Activated CD4-positive, alpha-beta T cell treated with anti-CD3 and anti-CD28 coated beads for 36 hours (primary cell): ENCODE measurements at regions of chr11 and their contacts with region 1.

Region 1: GRCh38 chr11:95231127-95231880 is at the start of gene SESN3:
- DNase-seq: peak; percentile 99
- ATAC-seq: peak; percentile 93
- H3K4me3 Mint-ChIP-seq: no peak within 1 kb of the TSS
- H3K27ac Mint-ChIP-seq: peak within 1 kb of the TSS; percentile 84
- H3K4me1 Mint-ChIP-seq: peaks cover 46% of the 10 kb centered on the region
- H3K27me3 Mint-ChIP-seq: no peaks in the 10 kb centered on the region
- total RNA-seq, gene SESN3: 8.4 to 12.3 TPM

Region 2: GRCh38 chr11:94128746-94129511 is 1102.4 kb before region 1 on chr11 and contains the start of gene PANX1:
- CTCF ChIA-PET with region 1: no interaction called
- POLR2A ChIA-PET with region 1: no interaction called
- intact Hi-C with region 1: loop called in 1 of 2 experiments (anchors 5 kb)
- DNase-seq: peak; percentile 84
- ATAC-seq: peak; percentile 81
- H3K4me3 Mint-ChIP-seq: no peak within 1 kb of the TSS
- H3K27ac Mint-ChIP-seq: peak within 1 kb of the TSS; percentile 90
- H3K4me1 Mint-ChIP-seq: peaks cover 23% of the 10 kb centered on the region
- H3K27me3 Mint-ChIP-seq: no peaks in the 10 kb centered on the region
- total RNA-seq, gene PANX1: 9.8 to 10.7 TPM

Region 3: GRCh38 chr11:95067039-95067840 is 164.1 kb before region 1 on chr11:
- CTCF ChIA-PET with region 1: interaction called, 4 read pairs
- POLR2A ChIA-PET with region 1: no interaction called
- intact Hi-C with region 1: loop called (anchors 1 to 5 kb)
- DNase-seq: peak; percentile 87
- ATAC-seq: peak; percentile 68
- H3K4me3 Mint-ChIP-seq: peak overlapping the region; percentile 97
- H3K27ac Mint-ChIP-seq: peak overlapping the region; percentile 92
- H3K4me1 Mint-ChIP-seq: peaks cover 25% of the 10 kb centered on the region
- H3K27me3 Mint-ChIP-seq: peaks cover 2% of the 10 kb centered on the region

Region 4: DNA sequence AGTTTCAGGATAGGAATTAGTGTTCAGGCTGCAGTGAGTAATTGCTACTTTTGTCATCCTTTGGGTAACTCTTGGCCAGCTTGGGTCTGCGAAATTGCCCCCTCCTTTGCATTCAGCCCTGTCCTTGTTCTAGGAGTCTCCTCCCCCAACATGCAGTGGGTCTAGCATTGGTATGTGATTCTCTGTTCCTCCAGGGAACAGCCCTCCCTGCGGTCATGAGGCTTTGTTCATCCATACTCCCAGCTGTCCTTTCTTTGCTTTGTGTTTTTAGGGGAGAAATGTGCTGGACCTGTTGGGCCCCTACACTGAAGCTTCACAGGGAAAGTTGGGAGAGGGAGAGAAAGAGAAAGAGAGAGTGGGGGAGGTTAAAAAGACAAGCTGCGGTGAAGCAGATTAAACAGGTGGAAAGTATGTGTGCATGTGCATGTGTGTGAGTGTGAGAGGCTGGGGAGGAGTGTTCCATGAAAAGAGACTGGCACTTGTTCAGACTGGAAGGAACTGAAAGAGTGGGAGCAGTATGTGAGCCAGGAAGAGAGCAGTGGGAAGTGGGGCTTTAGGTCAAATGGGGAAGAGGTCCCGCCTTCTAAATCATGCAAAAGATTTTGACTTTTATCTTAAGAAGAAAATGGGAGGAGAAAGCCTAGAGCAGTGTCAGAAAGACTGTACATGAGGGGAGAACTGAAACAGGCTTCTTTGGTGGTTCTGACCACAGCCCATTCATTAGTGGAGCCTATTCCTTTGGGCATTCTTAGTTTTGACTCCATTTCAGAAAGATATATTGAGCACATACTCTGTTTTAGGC is 17.6 kb after region 1 on chr11:
- CTCF ChIA-PET with region 1: interaction called, 12 read pairs
- POLR2A ChIA-PET with region 1: interaction called, 14 read pairs
- intact Hi-C with region 1: loop called (anchors 1 kb)
- DNase-seq: peak; percentile 15
- ATAC-seq: peak; percentile 33
- H3K4me3 Mint-ChIP-seq: no peak overlapping the region
- H3K27ac Mint-ChIP-seq: peak overlapping the region; percentile 56
- H3K4me1 Mint-ChIP-seq: peaks cover 37% of the 10 kb centered on the region
- H3K27me3 Mint-ChIP-seq: no peaks in the 10 kb centered on the region

Region 5: GRCh38 chr11:95556342-95557163 is 325.2 kb after region 1 on chr11:
- CTCF ChIA-PET with region 1: interaction called, 3 read pairs
- POLR2A ChIA-PET with region 1: no interaction called
- intact Hi-C with region 1: loop called in 1 of 2 experiments (anchors 1 kb)
- DNase-seq: peak; percentile 60
- ATAC-seq: peak; percentile 94
- H3K4me3 Mint-ChIP-seq: peak overlapping the region; percentile 17
- H3K27ac Mint-ChIP-seq: peak overlapping the region; percentile 90
- H3K4me1 Mint-ChIP-seq: peaks cover 23% of the 10 kb centered on the region
- H3K27me3 Mint-ChIP-seq: no peaks in the 10 kb centered on the region

Region 6: GRCh38 chr11:95705485-95706124 is 474.3 kb after region 1 on chr11:
- CTCF ChIA-PET with region 1: interaction called, 17 read pairs
- POLR2A ChIA-PET with region 1: no interaction called
- intact Hi-C with region 1: loop called (anchors 1 to 2 kb)
- DNase-seq: peak; percentile 92
- ATAC-seq: peak; percentile 83
- H3K4me3 Mint-ChIP-seq: no peak overlapping the region
- H3K27ac Mint-ChIP-seq: no peak overlapping the region
- H3K4me1 Mint-ChIP-seq: peaks cover 12% of the 10 kb centered on the region
- H3K27me3 Mint-ChIP-seq: no peaks in the 10 kb centered on the region

Region 7: DNA sequence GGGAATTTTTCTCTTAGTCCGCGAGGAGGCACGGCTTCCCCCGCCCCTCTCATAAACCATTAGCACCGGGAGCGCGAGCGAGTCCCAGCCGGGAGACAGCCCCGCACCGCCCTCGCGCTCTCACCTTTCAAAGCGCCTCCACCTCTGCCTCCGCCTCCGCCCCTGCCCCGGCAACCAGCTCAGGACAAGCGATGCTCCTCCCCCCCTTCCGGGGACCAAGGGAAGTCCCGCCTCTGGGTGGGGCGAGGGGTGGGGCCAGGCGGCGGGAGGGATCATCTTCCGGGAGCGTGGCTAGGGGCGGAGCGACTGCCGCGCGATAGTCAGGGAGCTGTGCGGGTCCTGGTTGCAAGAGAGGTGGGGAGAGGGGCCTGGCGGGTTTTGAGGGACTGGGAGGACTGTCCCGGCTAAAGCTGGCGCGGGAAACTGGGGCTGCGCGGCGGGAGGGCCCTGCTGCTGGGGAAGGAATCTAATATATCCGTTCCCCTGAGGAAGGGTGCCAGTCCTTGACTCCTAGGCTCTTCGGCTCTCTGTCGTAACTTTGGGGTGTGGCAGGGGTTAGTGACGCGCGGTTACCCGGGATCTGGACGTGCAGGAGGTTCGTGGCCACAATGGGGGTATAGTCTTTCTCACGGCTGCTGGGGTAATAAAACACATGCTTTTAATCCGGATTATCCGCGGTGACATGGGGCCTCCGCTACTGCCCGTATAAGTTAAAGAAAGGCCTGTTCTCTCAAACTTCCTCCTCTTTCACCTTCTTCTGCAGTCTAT is 1158.6 kb after region 1 on chr11 and contains the starts of genes CCDC82 and JRKL:
- CTCF ChIA-PET with region 1: no interaction called
- POLR2A ChIA-PET with region 1: no interaction called
- intact Hi-C with region 1: loop called in 1 of 2 experiments (anchors 2 kb)
- DNase-seq: peak; percentile 99
- ATAC-seq: peak; percentile 97
- H3K4me3 Mint-ChIP-seq: peak within 1 kb of the TSS; percentile 90
- H3K27ac Mint-ChIP-seq: peak within 1 kb of the TSS; percentile 82
- H3K4me1 Mint-ChIP-seq: peaks cover 66% of the 10 kb centered on the region
- H3K27me3 Mint-ChIP-seq: no peaks in the 10 kb centered on the region
- total RNA-seq, gene CCDC82: 32.1 to 38.3 TPM
- total RNA-seq, gene JRKL: 12.9 to 15.7 TPM